ENCODE measurements at regions of chr19 and their contacts with region 1.

Region 1: DNA sequence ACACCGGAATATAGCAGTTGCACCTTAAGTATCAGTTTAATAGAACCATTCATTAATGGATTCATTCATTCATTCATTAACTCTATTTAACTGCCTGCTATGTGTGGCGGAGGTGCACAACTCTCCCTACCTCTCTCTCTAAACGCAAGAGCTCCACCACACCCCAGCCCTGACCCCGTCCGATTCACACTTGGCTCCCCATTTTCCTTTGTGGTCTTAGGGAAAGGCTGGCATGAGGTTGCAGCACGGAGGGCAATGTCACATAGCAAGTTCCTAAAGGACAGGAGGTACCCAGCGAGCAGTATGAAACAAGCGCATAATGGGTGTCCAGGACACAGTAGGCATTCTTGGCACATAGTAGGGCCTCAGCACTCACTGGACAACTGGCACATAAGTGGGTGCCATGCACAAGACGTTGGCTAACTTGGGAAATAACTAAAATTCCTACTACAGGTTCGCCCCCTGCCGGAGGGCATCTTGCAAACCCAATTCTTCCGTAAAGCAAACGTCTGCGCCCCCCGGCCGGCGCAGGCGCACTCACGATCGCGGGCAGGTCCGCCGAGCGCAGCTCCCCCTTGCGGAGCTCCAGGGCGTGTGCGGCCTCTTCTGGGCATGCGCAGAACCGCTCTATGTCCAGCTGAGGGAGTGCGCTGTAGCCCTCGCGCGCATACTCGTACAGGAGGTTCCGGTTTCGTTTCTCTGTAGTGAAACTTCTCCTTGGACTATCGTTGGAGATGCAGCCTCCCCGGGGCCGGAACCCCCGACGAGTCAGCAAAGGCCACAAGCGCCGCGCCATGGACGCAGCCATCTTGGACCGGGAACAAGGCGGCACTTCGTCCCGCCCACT is at the start of gene SARS2:
- DNase-seq: peak; percentile 98 to 99
- ATAC-seq: peak; percentile 65 to 69
- H3K4me3 ChIP-seq: peak within 1 kb of the TSS; percentile 66
- H3K27ac ChIP-seq: peak within 1 kb of the TSS; percentile 87
- H3K4me1 ChIP-seq: peaks cover 19% of the 10 kb centered on the region
- CTCF ChIP-seq: peak; percentile 100
- EP300 ChIP-seq: no peak
- POLR2A ChIP-seq: no peak
- RAD21 ChIP-seq: peak; percentile 88 to 98
- polyA plus RNA-seq, gene SARS2: 46.1 and 46.7 TPM in 2 replicates

Region 2: GRCh38 chr19:38387550-38388348 is 542.4 kb before region 1 on chr19 and contains the start of gene GGN:
- CTCF ChIA-PET with region 1: interaction called, 9 read pairs
- POLR2A ChIA-PET with region 1: interaction called, 10 read pairs
- DNase-seq: peak; percentile 98 to 100
- ATAC-seq: peak; percentile 53 to 78
- H3K4me3 ChIP-seq: peak within 1 kb of the TSS; percentile 61
- H3K27ac ChIP-seq: peak within 1 kb of the TSS; percentile 71 to 90
- H3K4me1 ChIP-seq: peaks cover 35% of the 10 kb centered on the region
- CTCF ChIP-seq: no peak
- EP300 ChIP-seq: no peak
- POLR2A ChIP-seq: no peak; the same call in 1 of the 2 replicates
- RAD21 ChIP-seq: no peak
- polyA plus RNA-seq, gene GGN: not detected in 2 replicates

Region 3: DNA sequence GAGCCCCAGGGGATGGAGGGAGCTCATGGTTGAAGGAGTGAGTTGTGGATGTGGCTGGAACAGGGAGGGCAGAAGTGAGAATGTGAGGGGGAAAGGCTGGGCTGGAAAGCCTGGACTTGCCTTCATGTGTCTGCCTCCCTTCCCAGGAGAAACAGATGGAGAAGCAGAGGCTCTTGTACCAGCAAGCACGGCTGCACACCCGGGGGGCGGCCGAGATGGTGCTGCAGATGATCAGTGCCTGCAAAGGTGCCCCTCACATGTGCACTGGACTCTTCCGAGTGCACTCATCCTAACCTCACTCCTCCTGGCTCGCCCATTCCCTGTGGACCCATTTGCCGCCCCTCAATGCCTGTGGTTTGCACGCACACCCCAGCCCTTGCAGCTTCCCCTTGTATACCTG is 395.6 kb before region 1 on chr19:
- CTCF ChIA-PET with region 1: interaction called, 17 read pairs
- POLR2A ChIA-PET with region 1: interaction called, 5 read pairs
- DNase-seq: no peak
- ATAC-seq: no peak
- H3K4me3 ChIP-seq: no peak overlapping the region
- H3K27ac ChIP-seq: no peak overlapping the region
- H3K4me1 ChIP-seq: no peaks in the 10 kb centered on the region
- CTCF ChIP-seq: no peak
- EP300 ChIP-seq: no peak
- POLR2A ChIP-seq: 0 out of 2 replicates have a peak, but pooled peaks have one; percentile 7
- RAD21 ChIP-seq: no peak

Region 4: DNA sequence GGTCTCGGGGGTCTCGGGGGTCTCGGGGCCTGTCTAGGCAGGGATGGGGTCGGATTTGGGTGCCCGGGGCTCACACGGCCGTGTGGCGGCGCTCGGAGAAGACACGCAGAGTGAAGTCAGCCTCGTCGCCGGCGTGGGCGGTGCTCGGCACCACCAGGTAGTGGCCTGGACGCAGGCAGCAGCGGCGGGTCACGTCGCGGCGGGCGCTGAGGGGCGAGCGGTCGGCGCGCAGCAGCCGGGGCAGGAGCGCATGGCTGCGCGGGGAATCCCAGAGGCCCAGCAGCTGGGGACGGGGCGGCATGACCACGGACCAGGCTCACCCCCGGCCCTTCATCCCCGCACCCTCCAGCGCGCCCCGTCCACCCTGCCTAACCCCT is 194.1 kb before region 1 on chr19:
- CTCF ChIA-PET with region 1: interaction called, 25 read pairs
- POLR2A ChIA-PET with region 1: interaction called, 14 read pairs
- DNase-seq: peak; percentile 80 to 81
- ATAC-seq: peak; percentile 11 to 53
- H3K4me3 ChIP-seq: peak overlapping the region; percentile 49
- H3K27ac ChIP-seq: peak overlapping the region; percentile 70 to 88
- H3K4me1 ChIP-seq: peaks cover 57% of the 10 kb centered on the region
- CTCF ChIP-seq: 0 out of 3 replicates have a peak, but pooled peaks have one; percentile 12
- EP300 ChIP-seq: no peak
- POLR2A ChIP-seq: peak; percentile 43; the same call in 1 of the 2 replicates
- RAD21 ChIP-seq: peak; percentile 13 to 43; a peak in 4 of 5 replicates

Region 5: GRCh38 chr19:38849860-38850435 is 80.2 kb before region 1 on chr19 and contains the start of gene HNRNPL:
- CTCF ChIA-PET with region 1: interaction called, 7 read pairs
- POLR2A ChIA-PET with region 1: interaction called, 19 read pairs
- DNase-seq: no peak
- ATAC-seq: peak; percentile 60 to 79
- H3K4me3 ChIP-seq: peak within 1 kb of the TSS; percentile 69
- H3K27ac ChIP-seq: peak within 1 kb of the TSS; percentile 93 to 96
- H3K4me1 ChIP-seq: peaks cover 44% of the 10 kb centered on the region
- CTCF ChIP-seq: peak; percentile 40; the same call in 2 of the 3 replicates
- EP300 ChIP-seq: no peak
- POLR2A ChIP-seq: peak; percentile 90
- RAD21 ChIP-seq: no peak; a peak in 1 of 5 replicates
- polyA plus RNA-seq, gene HNRNPL: 440 and 487 TPM in 2 replicates

Region 6: GRCh38 chr19:38899447-38900219 is 30.5 kb before region 1 on chr19 and contains the starts of genes NFKBIB and SIRT2:
- CTCF ChIA-PET with region 1: interaction called, 59 read pairs
- POLR2A ChIA-PET with region 1: interaction called, 30 read pairs
- DNase-seq: peak; percentile 100
- ATAC-seq: peak; percentile 92 to 97
- H3K4me3 ChIP-seq: peak within 1 kb of the TSS; percentile 56
- H3K27ac ChIP-seq: peak within 1 kb of the TSS; percentile 76 to 85
- H3K4me1 ChIP-seq: peaks cover 17% of the 10 kb centered on the region
- CTCF ChIP-seq: no peak
- EP300 ChIP-seq: no peak
- POLR2A ChIP-seq: peak; percentile 63
- RAD21 ChIP-seq: no peak
- polyA plus RNA-seq, gene NFKBIB: 25.6 and 35.0 TPM in 2 replicates
- polyA plus RNA-seq, gene SIRT2: 28.6 and 31.5 TPM in 2 replicates

Region 7: GRCh38 chr19:38949580-38950367 is 19.6 kb after region 1 on chr19:
- CTCF ChIA-PET with region 1: interaction called, 245 read pairs
- POLR2A ChIA-PET with region 1: interaction called, 11 read pairs
- DNase-seq: no peak
- ATAC-seq: no peak
- H3K4me3 ChIP-seq: no peak overlapping the region
- H3K27ac ChIP-seq: no peak overlapping the region
- H3K4me1 ChIP-seq: peaks cover 23% of the 10 kb centered on the region
- CTCF ChIP-seq: no peak
- EP300 ChIP-seq: no peak
- POLR2A ChIP-seq: peak; percentile 27
- RAD21 ChIP-seq: no peak